ENCODE measurements at regions of chr12 and their contacts with region 1.

Region 1: GRCh38 chr12:92570056-92570753 is 132.6 kb upstream of the PLEKHG7 start:
- DNase-seq: peak; percentile 25
- H3K4me3 Mint-ChIP-seq: no peak overlapping the region
- H3K27ac Mint-ChIP-seq: no peak overlapping the region
- H3K4me1 Mint-ChIP-seq: peaks cover 24% of the 10 kb centered on the region
- H3K27me3 Mint-ChIP-seq: no peaks in the 10 kb centered on the region

Region 2: GRCh38 chr12:91382081-91382543 is 1188.1 kb before region 1 on chr12:
- CTCF ChIA-PET with region 1: interaction called, 39 read pairs
- POLR2A ChIA-PET with region 1: no interaction called
- intact Hi-C with region 1: loop called (anchors 1 kb)
- DNase-seq: peak; percentile 86
- H3K4me3 Mint-ChIP-seq: peak overlapping the region; percentile 60
- H3K27ac Mint-ChIP-seq: no peak overlapping the region
- H3K4me1 Mint-ChIP-seq: peaks cover 5% of the 10 kb centered on the region
- H3K27me3 Mint-ChIP-seq: peaks cover 4% of the 10 kb centered on the region

Region 3: DNA sequence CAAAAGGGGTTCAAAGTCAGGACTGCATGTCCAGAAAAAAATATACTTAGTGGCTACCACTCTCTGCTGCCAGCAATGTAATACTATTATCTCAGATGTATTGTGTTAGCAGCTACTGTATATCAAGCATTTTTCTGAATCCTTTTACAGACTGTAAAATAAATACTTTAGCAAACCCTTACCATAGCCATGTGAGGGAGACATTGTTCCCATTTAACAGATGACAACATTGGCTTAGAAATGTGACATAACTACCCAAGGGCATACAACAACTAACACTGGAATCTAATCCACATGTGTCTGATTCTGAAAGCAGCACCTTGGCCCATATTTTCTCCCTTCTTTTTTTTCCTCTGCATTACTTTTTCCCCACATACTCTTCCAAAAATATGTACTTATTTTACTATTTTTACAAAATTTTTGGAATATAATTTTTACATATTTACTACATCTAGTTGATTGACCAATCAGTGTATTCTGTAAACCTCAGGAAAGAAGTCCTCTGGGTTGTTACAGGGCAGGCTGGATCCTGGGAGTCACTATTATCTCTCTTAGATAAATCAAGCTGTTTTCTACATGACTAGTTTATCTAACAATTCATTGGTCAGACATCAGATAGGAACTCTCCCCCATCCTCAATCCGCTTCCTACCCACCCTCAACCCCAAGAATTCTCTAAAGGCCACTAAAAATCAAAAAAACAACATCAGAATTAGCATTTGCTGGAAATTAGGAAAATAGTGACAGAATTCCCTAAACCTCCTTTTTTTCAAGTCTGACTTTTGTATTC is 578.6 kb before region 1 on chr12:
- CTCF ChIA-PET with region 1: interaction called, 3 read pairs
- POLR2A ChIA-PET with region 1: no interaction called
- intact Hi-C with region 1: loop called (anchors 2 kb)
- DNase-seq: no peak
- H3K4me3 Mint-ChIP-seq: no peak overlapping the region
- H3K27ac Mint-ChIP-seq: no peak overlapping the region
- H3K4me1 Mint-ChIP-seq: peaks cover 27% of the 10 kb centered on the region
- H3K27me3 Mint-ChIP-seq: no peaks in the 10 kb centered on the region

Region 4: GRCh38 chr12:92185052-92185451 is 385.2 kb before region 1 on chr12:
- CTCF ChIA-PET with region 1: interaction called, 3 read pairs
- POLR2A ChIA-PET with region 1: no interaction called
- intact Hi-C with region 1: loop called (anchors 1 kb)
- DNase-seq: peak; percentile 49
- H3K4me3 Mint-ChIP-seq: no peak overlapping the region
- H3K27ac Mint-ChIP-seq: peak overlapping the region; percentile 47
- H3K4me1 Mint-ChIP-seq: peaks cover 46% of the 10 kb centered on the region
- H3K27me3 Mint-ChIP-seq: no peaks in the 10 kb centered on the region

Region 5: DNA sequence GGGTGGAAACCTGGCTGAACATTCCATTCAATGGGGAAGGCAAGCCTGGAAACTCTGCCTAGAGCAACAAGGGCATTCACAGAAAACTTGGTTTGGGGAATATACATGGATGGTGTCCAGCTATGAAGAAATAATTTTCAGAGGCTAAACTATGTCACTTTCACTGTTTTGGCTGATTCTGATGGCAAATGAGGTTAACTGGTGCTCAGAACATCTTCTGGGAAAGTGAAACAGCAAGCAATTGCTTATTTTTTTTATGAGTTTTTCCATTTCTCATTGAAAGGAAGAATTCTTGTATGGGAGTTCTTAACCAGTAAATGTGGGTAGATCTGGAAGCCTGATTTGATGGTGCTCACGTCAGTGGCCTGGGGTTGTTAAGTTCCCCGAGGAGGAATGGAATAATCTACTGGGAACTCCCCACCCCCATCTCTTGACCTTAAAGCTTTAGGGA is 291.8 kb before region 1 on chr12:
- CTCF ChIA-PET with region 1: no interaction called
- POLR2A ChIA-PET with region 1: no interaction called
- intact Hi-C with region 1: no loop called
- DNase-seq: no peak
- H3K4me3 Mint-ChIP-seq: no peak overlapping the region
- H3K27ac Mint-ChIP-seq: peak overlapping the region; percentile 60
- H3K4me1 Mint-ChIP-seq: peaks cover 14% of the 10 kb centered on the region
- H3K27me3 Mint-ChIP-seq: no peaks in the 10 kb centered on the region

Region 6: DNA sequence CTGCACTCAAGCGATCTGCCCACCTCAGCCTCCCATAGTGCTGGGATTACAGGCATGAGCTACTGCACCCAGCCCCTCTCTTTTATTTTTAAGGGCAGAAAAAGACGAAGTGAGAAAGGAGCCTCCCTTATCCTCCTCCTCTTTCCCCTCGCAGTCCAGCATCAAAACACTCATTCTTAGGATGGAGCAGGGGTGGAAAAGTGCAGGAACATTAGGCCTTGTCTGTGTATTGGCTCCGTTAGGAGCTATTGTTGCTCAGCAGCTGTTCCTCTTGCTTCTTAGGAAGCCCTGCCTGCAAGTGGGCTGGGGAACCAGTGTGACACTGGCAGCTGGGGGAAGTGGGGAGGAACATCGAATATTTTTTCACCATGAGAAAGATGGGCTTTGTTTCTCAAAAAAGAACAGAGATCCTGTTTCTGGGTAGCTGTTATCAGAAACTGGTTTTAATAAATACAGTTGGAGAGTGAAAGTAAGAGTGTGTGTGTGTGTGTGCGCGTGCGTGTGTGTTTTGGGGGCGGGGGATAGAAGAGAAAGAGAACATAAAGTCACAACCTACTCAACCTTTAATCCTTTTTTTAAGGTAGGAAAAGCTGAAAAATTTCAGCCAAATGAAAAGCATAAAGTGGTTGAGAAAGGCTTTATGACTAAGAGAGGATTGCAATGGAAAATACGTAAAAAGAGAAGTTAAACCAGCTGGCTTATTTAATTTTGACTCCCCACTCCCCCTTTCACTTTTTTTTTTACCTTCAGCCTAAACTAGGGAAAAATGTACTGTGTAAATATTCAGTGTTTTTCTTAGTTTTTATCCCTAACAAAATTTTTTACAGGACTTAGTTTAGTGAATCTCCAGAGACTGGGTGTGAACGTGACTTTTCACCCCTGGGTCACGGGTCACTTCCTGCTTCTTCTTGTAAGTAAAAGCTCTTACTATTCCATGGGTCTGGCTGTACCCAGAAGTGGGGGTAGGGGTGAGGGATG is 64.7 kb before region 1 on chr12:
- CTCF ChIA-PET with region 1: interaction called, 77 read pairs
- POLR2A ChIA-PET with region 1: interaction called, 6 read pairs
- intact Hi-C with region 1: loop called (anchors 1 kb)
- DNase-seq: peak; percentile 75
- H3K4me3 Mint-ChIP-seq: peak overlapping the region; percentile 69
- H3K27ac Mint-ChIP-seq: peak overlapping the region; percentile 96
- H3K4me1 Mint-ChIP-seq: peaks cover 51% of the 10 kb centered on the region
- H3K27me3 Mint-ChIP-seq: no peaks in the 10 kb centered on the region

Region 7: GRCh38 chr12:92608151-92609091 is 38.2 kb after region 1 on chr12:
- CTCF ChIA-PET with region 1: interaction called, 4 read pairs
- POLR2A ChIA-PET with region 1: no interaction called
- intact Hi-C with region 1: loop called (anchors 1 kb)
- DNase-seq: no peak
- H3K4me3 Mint-ChIP-seq: no peak overlapping the region
- H3K27ac Mint-ChIP-seq: peak overlapping the region; percentile 28
- H3K4me1 Mint-ChIP-seq: peaks cover 27% of the 10 kb centered on the region
- H3K27me3 Mint-ChIP-seq: no peaks in the 10 kb centered on the region

Measured in activated CD4-positive, alpha-beta memory T cell treated with anti-CD3 and anti-CD28 coated beads for 36 hours (primary cell).